Caki2 (cell line): ENCODE measurements at regions of chr1 and their contacts with region 1.

Region 1: DNA sequence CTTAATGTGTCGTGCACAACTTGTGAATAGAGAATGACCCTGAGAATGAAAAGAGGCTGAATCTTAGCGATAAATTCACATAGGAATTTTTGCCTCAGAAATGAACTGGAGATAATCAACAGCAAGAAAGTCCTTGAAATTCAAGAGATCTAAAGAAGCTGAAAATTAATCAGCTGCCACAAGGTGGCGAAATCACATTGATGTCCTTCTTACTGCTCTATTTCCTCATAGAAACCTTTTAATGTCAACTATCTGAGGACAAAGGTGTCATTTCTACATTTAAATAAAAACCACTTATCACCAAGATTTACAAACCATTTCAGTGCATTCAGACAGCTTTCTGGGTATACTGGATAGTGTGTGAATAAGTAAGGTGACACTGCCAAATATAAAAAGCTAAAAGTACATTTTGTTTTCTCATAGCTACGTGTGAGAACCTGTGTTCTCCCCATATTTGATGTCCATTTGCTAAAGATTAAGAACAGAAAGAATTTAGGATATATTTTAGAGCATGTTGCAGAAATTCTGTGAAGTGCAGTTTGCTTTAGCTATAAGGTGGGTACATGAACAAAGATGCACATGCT is 485.3 kb upstream of the PTBP2 start:
- DNase-seq: peak; percentile 46

Region 2: GRCh38 chr1:96445302-96445701 is 209.1 kb after region 1 on chr1:
- in situ Hi-C with region 1: no loop called
- DNase-seq: no peak

Region 3: DNA sequence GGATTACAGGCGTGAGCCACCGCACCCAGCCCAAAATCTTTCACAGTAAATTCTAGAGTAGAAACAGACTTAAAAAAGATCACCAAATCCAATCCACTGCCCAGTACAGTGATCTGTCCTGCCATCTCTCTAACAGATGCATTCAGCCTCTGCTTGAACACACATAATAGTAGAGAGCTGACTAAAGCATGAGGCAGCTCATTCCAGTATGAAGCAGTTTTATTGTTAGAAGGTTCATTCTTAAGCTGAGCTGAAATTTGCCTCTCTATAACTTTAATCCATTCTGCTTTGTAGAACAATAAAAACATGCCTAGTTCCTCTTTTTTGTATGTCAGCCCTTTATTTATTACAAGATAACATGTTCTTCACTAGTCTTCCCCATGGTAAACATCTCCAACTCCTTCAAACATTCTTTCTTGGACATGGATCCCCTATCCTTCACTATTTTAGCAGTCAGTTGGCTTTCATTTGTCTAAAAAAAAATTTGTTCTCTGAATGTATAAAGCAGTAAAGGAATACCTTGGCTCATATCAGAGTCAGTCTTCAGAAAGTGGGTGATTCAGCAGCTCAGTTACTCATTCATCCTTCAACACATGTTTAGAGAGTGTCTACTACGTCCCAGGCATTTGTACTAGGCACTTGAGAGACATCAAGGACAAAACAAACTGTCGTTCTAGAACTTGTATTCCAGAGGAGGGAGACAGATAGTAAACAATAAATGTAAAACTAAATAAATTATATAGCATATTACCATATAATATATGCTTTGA is 474.6 kb after region 1 on chr1:
- in situ Hi-C with region 1: loop called (anchors 10 kb)
- DNase-seq: no peak